Caco-2 (cell line): ENCODE measurements at regions of chr2 and their contacts with region 1.

Region 1: GRCh38 chr2:162063899-162064298 is 10.1 kb downstream of the DPP4 start:
- DNase-seq: no peak
- H3K4me3 ChIP-seq: no peak overlapping the region
- H3K4me3 Mint-ChIP-seq: peak overlapping the region; percentile 14
- H3K27ac Mint-ChIP-seq: peak overlapping the region; percentile 2
- H3K4me1 ChIP-seq: peaks cover 42% of the 10 kb centered on the region
- H3K4me1 Mint-ChIP-seq: peaks cover 53% of the 10 kb centered on the region
- H3K27me3 ChIP-seq: no peaks in the 10 kb centered on the region
- H3K27me3 Mint-ChIP-seq: no peaks in the 10 kb centered on the region
- CTCF ChIP-seq: no peak

Region 2: DNA sequence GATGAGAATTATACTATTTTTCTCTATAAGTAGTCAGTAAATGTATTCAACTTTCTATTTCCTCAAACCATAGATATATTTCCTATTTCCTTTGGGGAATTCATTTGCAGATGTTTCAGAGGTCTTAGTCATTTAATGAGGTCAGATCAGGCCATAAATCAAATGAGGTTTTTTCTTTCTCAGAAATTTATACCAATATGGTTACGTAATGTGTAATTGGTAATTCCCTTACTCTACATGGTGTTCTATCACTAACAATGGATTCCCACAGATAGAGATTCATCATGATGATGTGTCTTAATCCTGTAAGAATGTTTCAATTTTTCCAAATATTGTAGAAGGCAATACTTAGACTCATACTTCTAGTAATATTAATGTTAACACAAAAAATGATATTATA is 97.9 kb before region 1 on chr2:
- CTCF ChIA-PET with region 1: no interaction called
- POLR2A ChIA-PET with region 1: no interaction called
- intact Hi-C with region 1: no loop called
- DNase-seq: no peak
- H3K4me3 ChIP-seq: no peak overlapping the region
- H3K4me3 Mint-ChIP-seq: no peak overlapping the region
- H3K27ac Mint-ChIP-seq: no peak overlapping the region
- H3K4me1 ChIP-seq: no peaks in the 10 kb centered on the region
- H3K4me1 Mint-ChIP-seq: no peaks in the 10 kb centered on the region
- H3K27me3 ChIP-seq: no peaks in the 10 kb centered on the region
- H3K27me3 Mint-ChIP-seq: peaks cover 8% of the 10 kb centered on the region
- CTCF ChIP-seq: no peak

Region 3: DNA sequence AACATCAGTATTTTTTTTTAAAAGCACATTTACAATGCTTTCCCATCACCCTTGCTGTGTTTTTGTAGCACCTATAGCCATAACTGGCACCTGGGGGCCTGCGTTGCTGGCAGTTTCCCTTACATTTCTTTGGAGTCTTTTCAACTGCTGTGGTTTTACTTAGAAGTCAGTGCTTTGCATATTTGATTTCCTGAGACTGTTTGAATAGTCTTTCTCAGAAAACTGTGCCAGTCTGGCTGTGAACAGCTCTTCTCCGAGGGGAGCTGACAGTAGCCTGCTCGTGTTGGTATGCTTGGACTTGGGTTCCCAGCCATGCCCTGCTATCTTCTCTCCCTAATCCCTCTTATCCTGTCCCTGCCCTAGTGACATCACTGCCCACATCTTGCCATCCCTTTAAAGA is 71.4 kb before region 1 on chr2:
- CTCF ChIA-PET with region 1: no interaction called
- POLR2A ChIA-PET with region 1: no interaction called
- intact Hi-C with region 1: no loop called
- DNase-seq: no peak
- H3K4me3 ChIP-seq: no peak overlapping the region
- H3K4me3 Mint-ChIP-seq: no peak overlapping the region
- H3K27ac Mint-ChIP-seq: no peak overlapping the region
- H3K4me1 ChIP-seq: peaks cover 12% of the 10 kb centered on the region
- H3K4me1 Mint-ChIP-seq: peaks cover 9% of the 10 kb centered on the region
- H3K27me3 ChIP-seq: no peaks in the 10 kb centered on the region
- H3K27me3 Mint-ChIP-seq: no peaks in the 10 kb centered on the region
- CTCF ChIP-seq: no peak

Region 4: DNA sequence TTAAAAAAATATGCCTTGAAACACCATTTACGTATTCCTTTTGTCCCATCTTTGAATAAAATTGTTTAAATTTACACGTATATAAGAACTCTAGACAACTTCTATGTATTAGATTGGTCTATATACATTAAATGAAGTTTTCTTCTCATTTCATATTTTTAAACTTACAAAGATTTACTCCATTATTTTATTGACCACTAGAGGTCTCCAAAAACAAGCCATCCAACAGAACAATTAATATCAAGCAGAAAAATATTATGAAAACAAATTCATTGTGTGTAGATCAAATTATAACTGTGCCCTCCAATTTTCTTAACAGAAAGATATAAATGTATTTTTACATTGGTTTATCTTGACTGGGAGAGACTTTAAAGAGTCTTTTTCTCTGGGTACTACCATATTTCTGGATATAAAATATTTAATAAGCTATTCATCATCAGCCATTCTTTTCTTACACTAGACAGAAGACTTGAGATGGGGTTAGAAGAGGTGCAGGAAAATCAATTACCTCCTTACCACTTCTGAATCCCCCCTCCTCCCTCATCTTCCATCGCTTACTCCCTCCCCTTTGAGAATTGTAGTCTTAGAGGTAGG is 56.4 kb before region 1 on chr2:
- CTCF ChIA-PET with region 1: no interaction called
- POLR2A ChIA-PET with region 1: no interaction called
- intact Hi-C with region 1: loop called (anchors 2 kb)
- DNase-seq: no peak
- H3K4me3 ChIP-seq: no peak overlapping the region
- H3K4me3 Mint-ChIP-seq: no peak overlapping the region
- H3K27ac Mint-ChIP-seq: no peak overlapping the region
- H3K4me1 ChIP-seq: no peaks in the 10 kb centered on the region
- H3K4me1 Mint-ChIP-seq: peaks cover 11% of the 10 kb centered on the region
- H3K27me3 ChIP-seq: no peaks in the 10 kb centered on the region
- H3K27me3 Mint-ChIP-seq: no peaks in the 10 kb centered on the region
- CTCF ChIP-seq: peak; percentile 39 to 63

Region 5: DNA sequence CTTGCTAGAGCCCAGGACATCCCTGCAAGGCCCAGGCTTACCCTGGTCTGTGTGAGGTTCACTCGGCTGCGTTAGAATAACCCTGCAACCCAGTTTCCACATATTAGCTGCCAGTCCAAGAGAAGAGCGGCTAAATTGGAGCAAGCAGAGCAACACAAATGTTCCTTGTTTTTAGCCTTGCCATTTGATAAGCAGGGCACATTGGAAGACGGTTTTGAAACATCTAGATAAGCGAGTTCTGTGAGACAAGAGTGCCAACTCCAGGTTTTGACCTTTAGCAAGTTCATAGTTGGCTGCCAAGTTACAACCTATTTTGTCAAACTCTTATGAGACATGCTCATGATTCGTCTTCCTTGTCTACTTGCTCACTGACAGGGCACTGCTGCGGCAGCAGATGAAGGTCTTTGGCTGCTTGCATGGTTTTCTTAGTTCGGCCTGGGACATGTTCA is 13.4 kb before region 1 on chr2:
- CTCF ChIA-PET with region 1: no interaction called
- POLR2A ChIA-PET with region 1: no interaction called
- intact Hi-C with region 1: loop called (anchors 2 kb)
- DNase-seq: no peak
- H3K4me3 ChIP-seq: no peak overlapping the region
- H3K4me3 Mint-ChIP-seq: no peak overlapping the region
- H3K27ac Mint-ChIP-seq: no peak overlapping the region
- H3K4me1 ChIP-seq: peaks cover 4% of the 10 kb centered on the region; the same call in 1 of the 2 replicates
- H3K4me1 Mint-ChIP-seq: peaks cover under 1% of the 10 kb centered on the region
- H3K27me3 ChIP-seq: no peaks in the 10 kb centered on the region
- H3K27me3 Mint-ChIP-seq: no peaks in the 10 kb centered on the region
- CTCF ChIP-seq: no peak

Region 6: GRCh38 chr2:162073888-162074645 is 10.2 kb after region 1 on chr2 and contains the start of gene DPP4:
- CTCF ChIA-PET with region 1: no interaction called
- POLR2A ChIA-PET with region 1: interaction called, 8 read pairs
- intact Hi-C with region 1: loop called (anchors 1 kb)
- DNase-seq: peak; percentile 87 to 89
- H3K4me3 ChIP-seq: peak within 1 kb of the TSS; percentile 95
- H3K4me3 Mint-ChIP-seq: peak within 1 kb of the TSS; percentile 87
- H3K27ac Mint-ChIP-seq: peak within 1 kb of the TSS; percentile 54
- H3K4me1 ChIP-seq: peaks cover 55% of the 10 kb centered on the region
- H3K4me1 Mint-ChIP-seq: peaks cover 39% of the 10 kb centered on the region
- H3K27me3 ChIP-seq: no peaks in the 10 kb centered on the region
- H3K27me3 Mint-ChIP-seq: no peaks in the 10 kb centered on the region
- CTCF ChIP-seq: no peak
- total RNA-seq, gene DPP4: 190 and 199 TPM in 2 replicates

Region 7: GRCh38 chr2:162107361-162107901 is 43.5 kb after region 1 on chr2:
- CTCF ChIA-PET with region 1: no interaction called
- POLR2A ChIA-PET with region 1: no interaction called
- intact Hi-C with region 1: loop called (anchors 1 kb)
- DNase-seq: peak in 1 of 2 experiments; percentile 55
- H3K4me3 ChIP-seq: no peak overlapping the region
- H3K4me3 Mint-ChIP-seq: peak overlapping the region; percentile 21
- H3K27ac Mint-ChIP-seq: peak overlapping the region; percentile 73
- H3K4me1 ChIP-seq: peaks cover 60% of the 10 kb centered on the region
- H3K4me1 Mint-ChIP-seq: peaks cover 30% of the 10 kb centered on the region
- H3K27me3 ChIP-seq: no peaks in the 10 kb centered on the region
- H3K27me3 Mint-ChIP-seq: no peaks in the 10 kb centered on the region
- CTCF ChIP-seq: no peak

Region 8: DNA sequence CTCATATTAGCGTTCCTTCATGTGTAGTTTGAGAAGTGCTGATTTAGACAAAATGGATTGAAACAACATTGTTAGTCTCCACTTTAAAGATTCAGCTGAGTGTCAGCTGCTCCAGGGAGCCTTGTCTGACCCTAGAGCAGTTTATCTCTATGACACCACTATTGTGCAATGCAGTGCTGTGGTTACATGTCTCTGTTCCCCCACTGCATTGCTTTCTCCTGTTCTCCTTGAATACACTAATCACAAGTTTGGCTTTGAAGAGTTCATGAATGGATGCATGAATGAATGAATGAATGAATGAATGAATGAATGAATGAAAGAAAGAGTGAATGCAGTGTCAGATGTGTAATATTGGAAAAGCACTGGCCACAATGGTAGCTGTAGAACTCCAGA is 49.9 kb after region 1 on chr2:
- CTCF ChIA-PET with region 1: interaction called, 3 read pairs
- POLR2A ChIA-PET with region 1: interaction called, 3 read pairs
- intact Hi-C with region 1: loop called (anchors 1 kb)
- DNase-seq: peak; percentile 75 to 78
- H3K4me3 ChIP-seq: no peak overlapping the region
- H3K4me3 Mint-ChIP-seq: peak overlapping the region; percentile 38
- H3K27ac Mint-ChIP-seq: peak overlapping the region; percentile 82
- H3K4me1 ChIP-seq: peaks cover 66% of the 10 kb centered on the region
- H3K4me1 Mint-ChIP-seq: peaks cover 32% of the 10 kb centered on the region
- H3K27me3 ChIP-seq: no peaks in the 10 kb centered on the region
- H3K27me3 Mint-ChIP-seq: no peaks in the 10 kb centered on the region
- CTCF ChIP-seq: no peak